GM10248 (cell line): ENCODE measurements at regions of chr20 and their contacts with region 1.

Region 1: DNA sequence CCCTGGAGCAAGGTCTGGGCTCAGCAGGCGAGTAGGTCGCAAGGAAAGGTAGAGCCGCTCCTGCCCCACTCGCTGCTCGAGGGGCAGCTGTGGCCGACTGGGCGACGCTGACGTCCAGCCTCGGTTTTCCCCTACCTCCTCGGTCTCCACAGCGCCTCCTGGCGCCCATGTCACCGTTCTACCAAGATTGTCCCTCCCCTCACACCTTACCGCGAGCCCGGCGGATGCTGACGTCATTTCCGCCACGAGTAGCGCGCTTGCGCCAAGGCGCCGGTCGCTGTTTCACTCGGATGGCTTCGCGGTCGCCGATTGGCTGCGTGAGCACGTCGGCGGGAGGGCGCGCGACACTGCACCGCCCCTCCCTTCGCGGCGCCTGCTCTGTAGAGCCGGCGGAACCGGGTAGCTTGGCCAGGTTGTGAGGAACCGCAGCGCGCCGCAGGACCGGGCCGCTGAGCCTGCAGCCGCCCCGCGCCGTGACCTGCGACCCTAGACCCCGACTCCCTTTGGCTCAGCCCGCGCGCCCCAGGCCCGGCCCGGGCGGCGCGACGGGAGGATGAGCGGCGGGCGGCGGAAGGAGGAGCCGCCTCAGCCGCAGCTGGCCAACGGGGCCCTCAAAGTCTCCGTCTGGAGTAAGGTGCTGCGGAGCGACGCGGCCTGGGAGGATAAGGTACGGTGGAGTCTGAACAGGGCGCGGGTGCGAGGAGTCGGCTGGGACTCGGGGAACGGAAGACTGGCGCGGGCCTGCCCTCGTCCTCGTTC is at the start of gene RAB5IF:
- DNase-seq: peak; percentile 95
- CTCF ChIP-seq: peak; percentile 96

Region 2: DNA sequence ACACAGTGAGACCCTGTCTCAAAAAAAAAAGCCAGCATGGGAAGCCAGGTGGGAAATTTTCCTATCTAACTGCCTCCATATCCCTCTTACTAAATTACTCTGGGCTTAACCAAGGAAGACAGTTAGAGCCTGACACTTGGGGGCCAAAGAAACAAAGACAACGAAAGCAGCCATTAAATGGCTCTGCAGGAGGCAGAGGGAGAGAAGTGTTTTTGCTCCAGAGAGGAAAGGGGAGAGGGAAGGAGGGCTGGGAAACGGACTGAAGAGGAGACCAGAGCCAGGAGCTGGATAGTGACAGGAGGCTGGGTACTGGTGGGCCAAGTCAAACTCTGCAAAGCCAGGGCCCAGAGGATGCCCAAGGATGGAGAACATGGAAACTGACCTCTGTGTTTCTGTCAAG is 42.9 kb before region 1 on chr20:
- CTCF ChIA-PET with region 1: interaction called, 31 read pairs
- POLR2A ChIA-PET with region 1: no interaction called
- DNase-seq: no peak
- CTCF ChIP-seq: no peak

Region 3: GRCh38 chr20:36573103-36573794 is 32.3 kb before region 1 on chr20 and contains the start of gene TGIF2:
- CTCF ChIA-PET with region 1: interaction called, 15 read pairs
- POLR2A ChIA-PET with region 1: interaction called, 7 read pairs
- DNase-seq: peak; percentile 99
- CTCF ChIP-seq: no peak

Region 4: GRCh38 chr20:36579996-36580545 is 25.5 kb before region 1 on chr20:
- CTCF ChIA-PET with region 1: interaction called, 15 read pairs
- POLR2A ChIA-PET with region 1: interaction called, 3 read pairs
- DNase-seq: no peak
- CTCF ChIP-seq: no peak

Region 5: DNA sequence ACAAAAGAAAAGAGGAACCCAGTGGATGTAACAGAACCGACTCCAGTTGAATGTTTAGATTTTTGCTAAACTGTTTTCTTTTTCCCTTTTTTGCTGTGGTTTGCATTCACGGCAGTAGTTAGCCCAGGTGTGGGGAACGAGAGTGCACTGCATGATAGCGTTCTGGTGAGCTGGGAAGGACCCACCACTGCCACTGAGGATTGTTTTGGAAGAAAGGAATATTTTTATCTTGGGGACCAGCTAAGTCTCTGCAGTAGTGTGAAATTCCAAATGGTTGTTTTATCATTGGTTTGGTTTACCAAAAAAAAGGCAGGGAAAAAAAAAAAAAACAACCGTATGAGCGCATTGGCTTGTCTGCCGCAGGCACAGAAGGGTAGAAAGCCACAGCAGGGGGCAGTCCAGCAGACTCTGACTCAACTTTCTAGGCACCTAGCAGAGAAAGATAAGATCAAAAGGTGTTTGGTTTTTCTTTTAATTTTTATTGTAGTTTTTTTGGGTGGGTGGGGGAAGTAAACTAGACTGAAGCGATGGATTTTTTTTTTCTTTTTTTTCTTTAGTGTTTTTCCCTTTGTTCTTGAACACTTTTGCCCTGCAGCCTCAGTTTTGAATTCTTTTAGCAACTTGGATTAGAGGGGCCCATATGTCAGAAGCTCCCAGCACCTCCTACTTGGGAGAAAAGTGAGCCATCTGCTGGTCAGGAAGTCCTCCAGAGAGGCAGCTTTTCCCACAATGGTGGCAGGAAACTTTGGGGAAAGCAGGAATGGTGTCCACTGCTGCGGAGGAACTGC is 13.5 kb before region 1 on chr20:
- CTCF ChIA-PET with region 1: interaction called, 62 read pairs
- POLR2A ChIA-PET with region 1: interaction called, 24 read pairs
- DNase-seq: no peak
- CTCF ChIP-seq: peak; percentile 49

Region 6: GRCh38 chr20:36754656-36755222 is 149.2 kb after region 1 on chr20:
- CTCF ChIA-PET with region 1: interaction called, 29 read pairs
- POLR2A ChIA-PET with region 1: no interaction called
- DNase-seq: peak; percentile 50
- CTCF ChIP-seq: peak; percentile 62